CD8-positive, alpha-beta T cell (primary cell): ENCODE measurements at regions of chr6 and their contacts with region 1.

Region 1: GRCh38 chr6:30102970-30103874 is 9.7 kb downstream of the TRIM31 start:
- DNase-seq: peak; percentile 72 to 91 (median 83)
- ATAC-seq: peak; percentile 89
- H3K4me3 ChIP-seq: peak overlapping the region; percentile 51 to 64
- H3K4me3 Mint-ChIP-seq: peak overlapping the region; percentile 87
- H3K27ac ChIP-seq: peak overlapping the region in 1 of 2 experiments; percentile 42
- H3K27ac Mint-ChIP-seq: peak overlapping the region; percentile 56
- H3K4me1 ChIP-seq: peaks cover 38% of the 10 kb centered on the region
- H3K4me1 Mint-ChIP-seq: peaks cover 40% of the 10 kb centered on the region
- H3K27me3 ChIP-seq: peaks cover 0 to 23% of the 10 kb centered on the region in 2 experiments
- H3K27me3 Mint-ChIP-seq: peaks cover 41% of the 10 kb centered on the region
- CTCF ChIP-seq: peak; percentile 91

Region 2: DNA sequence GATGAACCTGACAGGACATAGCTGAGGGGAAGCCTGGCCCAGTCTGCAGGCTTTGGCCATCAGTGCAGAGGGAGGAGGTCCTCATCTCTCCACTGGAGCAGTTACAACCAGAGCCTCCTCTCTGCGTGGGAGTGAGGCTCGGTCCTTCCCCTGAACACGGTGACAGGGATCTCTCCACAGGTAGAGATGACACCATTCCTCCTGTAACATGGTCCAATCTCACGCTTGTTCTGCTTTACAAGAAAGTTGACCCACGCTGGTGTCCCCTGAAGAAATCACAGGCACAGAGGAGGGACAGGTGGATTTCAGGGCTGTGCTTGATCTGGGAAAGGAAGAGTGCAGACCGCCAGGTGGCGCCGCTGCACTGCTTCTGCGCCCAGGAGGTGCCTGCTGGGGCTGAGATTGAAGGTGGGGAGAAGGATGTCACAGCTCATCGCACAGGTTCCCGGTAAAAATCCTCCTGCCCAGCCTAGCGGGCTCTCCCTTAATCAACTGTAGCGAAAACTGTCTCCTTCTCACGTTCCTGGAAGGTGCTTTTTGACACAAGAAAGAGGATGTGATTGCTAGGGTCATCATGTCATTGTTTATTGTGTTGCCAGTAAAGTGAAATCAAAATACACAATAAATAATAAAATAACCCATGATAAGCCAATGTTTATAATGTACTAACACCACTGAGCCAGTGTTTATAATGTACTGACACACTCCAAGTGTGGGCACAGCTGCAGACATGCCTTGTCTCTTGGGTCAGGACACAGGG is 255.2 kb before region 1 on chr6:
- CTCF ChIA-PET with region 1: interaction called, 7 read pairs
- POLR2A ChIA-PET with region 1: no interaction called
- intact Hi-C with region 1: loop called in 1 of 2 experiments (anchors 1 kb)
- DNase-seq: peak; percentile 74 to 94 (median 85)
- ATAC-seq: peak; percentile 86
- H3K4me3 ChIP-seq: no peak overlapping the region
- H3K4me3 Mint-ChIP-seq: no peak overlapping the region
- H3K27ac ChIP-seq: no peak overlapping the region
- H3K27ac Mint-ChIP-seq: no peak overlapping the region
- H3K4me1 ChIP-seq: peaks cover 3% of the 10 kb centered on the region
- H3K4me1 Mint-ChIP-seq: peaks cover 8% of the 10 kb centered on the region
- H3K27me3 ChIP-seq: peaks cover 11 to 23% of the 10 kb centered on the region in 2 experiments
- H3K27me3 Mint-ChIP-seq: peaks cover 58% of the 10 kb centered on the region
- CTCF ChIP-seq: peak; percentile 97

Region 3: GRCh38 chr6:30002871-30003270 is 100.4 kb before region 1 on chr6:
- CTCF ChIA-PET with region 1: no interaction called
- POLR2A ChIA-PET with region 1: no interaction called
- intact Hi-C with region 1: no loop called
- DNase-seq: no peak
- ATAC-seq: no peak
- H3K4me3 ChIP-seq: no peak overlapping the region
- H3K4me3 Mint-ChIP-seq: no peak overlapping the region
- H3K27ac ChIP-seq: no peak overlapping the region
- H3K27ac Mint-ChIP-seq: no peak overlapping the region
- H3K4me1 ChIP-seq: peaks cover 20% of the 10 kb centered on the region
- H3K4me1 Mint-ChIP-seq: peaks cover 8% of the 10 kb centered on the region
- H3K27me3 ChIP-seq: peaks cover 14 to 21% of the 10 kb centered on the region in 2 experiments
- H3K27me3 Mint-ChIP-seq: peaks cover 13% of the 10 kb centered on the region
- CTCF ChIP-seq: no peak

Region 4: DNA sequence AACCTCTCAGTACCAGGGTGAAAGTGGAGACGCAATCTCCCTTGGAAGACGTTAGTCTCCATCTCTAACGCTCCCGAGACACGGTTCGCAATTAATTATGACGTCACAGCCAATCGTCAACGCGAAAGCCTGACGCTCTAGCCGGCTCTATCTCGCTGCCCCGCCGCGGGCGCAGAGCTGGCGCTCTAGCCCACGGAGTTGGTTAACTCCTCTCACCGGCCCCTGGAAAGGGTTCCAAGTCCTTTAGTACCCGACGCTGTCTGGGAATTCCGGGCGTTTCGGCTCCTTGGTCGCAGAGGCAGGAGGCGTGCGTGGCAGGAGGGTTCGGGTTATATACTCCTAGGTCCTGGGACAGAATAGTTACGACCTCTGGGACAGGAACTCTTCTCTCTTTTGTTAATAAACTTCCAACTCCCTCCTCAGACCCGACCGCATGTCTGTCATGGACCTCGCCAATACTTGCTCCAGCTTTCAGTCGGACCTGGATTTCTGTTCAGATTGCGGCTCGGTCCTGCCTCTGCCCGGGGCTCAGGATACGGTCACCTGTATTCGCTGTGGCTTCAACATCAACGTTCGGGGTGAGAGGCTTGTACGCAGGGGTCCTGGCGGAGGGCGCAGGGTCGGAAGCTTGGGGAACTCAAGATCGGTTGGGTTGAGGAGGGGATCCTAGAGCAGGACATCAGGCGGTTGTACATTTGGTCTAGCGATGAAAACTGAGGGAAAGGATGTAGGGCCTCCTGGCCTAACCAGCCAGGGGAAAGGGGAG is 41.9 kb before region 1 on chr6 and contains the start of gene POLR1H:
- CTCF ChIA-PET with region 1: interaction called, 9 read pairs
- POLR2A ChIA-PET with region 1: interaction called, 6 read pairs
- intact Hi-C with region 1: loop called (anchors 2 kb)
- DNase-seq: peak; percentile 68 to 96 (median 87)
- ATAC-seq: peak; percentile 87
- H3K4me3 ChIP-seq: peak within 1 kb of the TSS; percentile 82 to 87
- H3K4me3 Mint-ChIP-seq: peak within 1 kb of the TSS; percentile 97
- H3K27ac ChIP-seq: peak within 1 kb of the TSS; percentile 89 to 93
- H3K27ac Mint-ChIP-seq: peak within 1 kb of the TSS; percentile 99
- H3K4me1 ChIP-seq: peaks cover 29% of the 10 kb centered on the region
- H3K4me1 Mint-ChIP-seq: peaks cover 56% of the 10 kb centered on the region
- H3K27me3 ChIP-seq: no peaks in the 10 kb centered on the region
- H3K27me3 Mint-ChIP-seq: no peaks in the 10 kb centered on the region
- CTCF ChIP-seq: no peak
- total RNA-seq, gene POLR1H: 26.6 to 30.7 TPM

Region 5: GRCh38 chr6:30169658-30170614 is 66.7 kb after region 1 on chr6:
- CTCF ChIA-PET with region 1: interaction called, 3 read pairs
- POLR2A ChIA-PET with region 1: no interaction called
- intact Hi-C with region 1: loop called (anchors 1 kb)
- DNase-seq: peak in 2 of 9 experiments; percentile 54 to 67
- ATAC-seq: peak; percentile 86
- H3K4me3 ChIP-seq: no peak overlapping the region
- H3K4me3 Mint-ChIP-seq: no peak overlapping the region
- H3K27ac ChIP-seq: no peak overlapping the region
- H3K27ac Mint-ChIP-seq: no peak overlapping the region
- H3K4me1 ChIP-seq: peaks cover 10% of the 10 kb centered on the region
- H3K4me1 Mint-ChIP-seq: peaks cover 5% of the 10 kb centered on the region
- H3K27me3 ChIP-seq: peaks cover 3 to 5% of the 10 kb centered on the region in 2 experiments
- H3K27me3 Mint-ChIP-seq: peaks cover 51% of the 10 kb centered on the region
- CTCF ChIP-seq: peak; percentile 83

Region 6: DNA sequence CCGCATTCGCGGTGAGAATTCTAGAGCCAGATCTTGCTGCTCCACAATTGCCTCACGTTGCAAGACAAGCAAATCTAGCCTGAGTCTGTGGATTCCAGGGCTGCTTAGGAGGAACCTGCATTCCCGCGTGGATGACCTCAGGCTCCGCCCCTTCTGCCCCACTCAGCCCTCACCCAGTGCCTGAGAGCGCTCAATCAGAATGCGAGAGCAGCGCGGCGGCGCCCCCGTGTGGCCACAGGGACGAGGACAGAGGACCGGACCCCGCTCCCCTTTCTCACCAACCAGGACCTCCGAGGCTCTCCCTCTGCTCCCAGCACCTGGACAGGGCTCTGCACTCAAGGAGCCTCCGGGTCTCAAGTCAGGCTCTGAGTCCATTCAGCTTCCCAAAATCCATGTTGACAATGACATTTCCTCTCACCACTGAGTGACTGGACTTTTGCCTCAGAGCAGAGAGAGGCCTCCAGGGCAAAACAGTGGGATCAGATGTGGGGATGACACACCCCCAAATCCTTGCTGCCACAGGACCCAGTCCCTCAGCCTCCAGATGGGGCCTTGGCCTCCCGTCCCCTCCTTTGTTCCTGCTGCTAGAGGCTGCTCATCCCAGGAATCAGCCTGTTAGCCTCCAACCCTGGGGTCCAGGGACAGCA is 293.7 kb after region 1 on chr6:
- CTCF ChIA-PET with region 1: no interaction called
- POLR2A ChIA-PET with region 1: no interaction called
- intact Hi-C with region 1: loop called (anchors 1 kb)
- DNase-seq: peak; percentile 65 to 92 (median 87)
- ATAC-seq: peak; percentile 99
- H3K4me3 ChIP-seq: no peak overlapping the region
- H3K4me3 Mint-ChIP-seq: no peak overlapping the region
- H3K27ac ChIP-seq: no peak overlapping the region
- H3K27ac Mint-ChIP-seq: no peak overlapping the region
- H3K4me1 ChIP-seq: peaks cover 4% of the 10 kb centered on the region
- H3K4me1 Mint-ChIP-seq: peaks cover 4% of the 10 kb centered on the region
- H3K27me3 ChIP-seq: peaks cover 0 to 10% of the 10 kb centered on the region in 2 experiments
- H3K27me3 Mint-ChIP-seq: peaks cover 26% of the 10 kb centered on the region
- CTCF ChIP-seq: peak; percentile 94